ENCODE measurements at regions of chr3 and their contacts with region 1.

Region 1: GRCh38 chr3:123328851-123329635 is 119.8 kb downstream of the ADCY5 start:
- DNase-seq: peak; percentile 32
- H3K4me3 ChIP-seq: no peak overlapping the region
- H3K27ac ChIP-seq: no peak overlapping the region
- H3K4me1 ChIP-seq: peaks cover 11% of the 10 kb centered on the region
- H3K27me3 ChIP-seq: no peaks in the 10 kb centered on the region
- CTCF ChIP-seq: peak; percentile 85 to 93

Region 2: DNA sequence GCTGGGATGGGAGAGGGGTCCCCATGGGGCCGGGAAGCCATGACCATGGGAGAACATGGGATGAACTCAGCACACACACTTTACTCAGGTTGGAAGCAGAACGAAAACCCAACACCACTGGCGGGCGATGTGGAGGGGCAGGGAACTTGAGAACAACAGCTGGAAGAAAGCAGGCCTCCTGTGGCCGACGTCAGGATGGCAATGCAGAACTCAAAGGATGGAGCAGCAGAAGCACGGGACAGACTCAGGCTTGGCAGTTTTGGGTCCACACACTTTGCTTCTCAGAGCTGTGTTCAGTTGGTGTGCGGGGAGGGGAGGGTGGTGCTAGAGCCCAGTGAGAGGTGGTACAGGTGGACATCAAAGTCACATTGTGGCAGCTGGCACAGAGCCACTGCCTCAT is 46.6 kb before region 1 on chr3:
- CTCF ChIA-PET with region 1: no interaction called
- dilution Hi-C with region 1: no loop called
- in situ Hi-C with region 1: no loop called
- intact Hi-C with region 1: no loop called
- DNase-seq: no peak
- H3K4me3 ChIP-seq: no peak overlapping the region
- H3K27ac ChIP-seq: no peak overlapping the region
- H3K4me1 ChIP-seq: peaks cover 9% of the 10 kb centered on the region
- H3K27me3 ChIP-seq: no peaks in the 10 kb centered on the region
- CTCF ChIP-seq: no peak

Region 3: GRCh38 chr3:123361071-123361470 is 32.0 kb after region 1 on chr3:
- CTCF ChIA-PET with region 1: no interaction called
- dilution Hi-C with region 1: loop called (anchors 5 kb)
- in situ Hi-C with region 1: no loop called
- intact Hi-C with region 1: no loop called
- DNase-seq: no peak
- H3K4me3 ChIP-seq: no peak overlapping the region
- H3K27ac ChIP-seq: no peak overlapping the region
- H3K4me1 ChIP-seq: no peaks in the 10 kb centered on the region
- H3K27me3 ChIP-seq: peaks cover 1% of the 10 kb centered on the region
- CTCF ChIP-seq: peak; percentile 11 to 15

Region 4: GRCh38 chr3:123375014-123375940 is 46.2 kb after region 1 on chr3:
- CTCF ChIA-PET with region 1: no interaction called
- dilution Hi-C with region 1: no loop called
- in situ Hi-C with region 1: no loop called
- intact Hi-C with region 1: loop called (anchors 1 kb)
- DNase-seq: no peak
- H3K4me3 ChIP-seq: no peak overlapping the region
- H3K27ac ChIP-seq: no peak overlapping the region
- H3K4me1 ChIP-seq: peaks cover 15% of the 10 kb centered on the region
- H3K27me3 ChIP-seq: no peaks in the 10 kb centered on the region
- CTCF ChIP-seq: peak in 1 of 2 donors; percentile 39

Region 5: DNA sequence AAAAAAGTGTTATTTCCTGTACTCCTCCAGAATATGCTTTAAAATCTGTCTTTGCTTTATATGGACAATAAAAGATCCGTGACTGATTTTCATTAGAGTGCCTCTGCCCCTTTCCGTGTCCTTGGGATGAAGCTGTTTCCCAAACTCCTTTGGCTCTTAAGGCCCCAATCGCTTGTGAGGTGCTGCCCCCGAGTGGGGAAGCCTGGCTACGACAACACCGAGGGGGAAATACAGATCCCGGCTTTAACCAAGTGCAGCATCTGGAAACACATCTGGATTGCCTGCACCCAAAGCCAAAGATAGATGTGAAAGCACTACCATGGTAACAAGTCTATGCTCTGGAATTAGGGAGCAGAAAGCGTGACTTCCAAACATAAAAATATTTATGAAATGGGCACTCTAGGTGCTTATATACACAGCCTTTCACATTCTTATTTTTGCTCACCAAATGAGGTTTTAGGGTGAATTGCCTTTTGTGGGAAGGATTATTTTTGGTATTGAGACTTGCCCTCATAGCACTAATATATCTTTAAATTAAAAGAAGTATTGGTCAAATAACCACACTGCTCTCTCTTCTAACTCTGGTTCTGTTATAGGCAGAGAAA is 160.5 kb after region 1 on chr3:
- CTCF ChIA-PET with region 1: interaction called, 8 read pairs
- dilution Hi-C with region 1: no loop called
- in situ Hi-C with region 1: loop called (anchors 10 kb)
- intact Hi-C with region 1: loop called (anchors 1 kb)
- DNase-seq: peak; percentile 23
- H3K4me3 ChIP-seq: no peak overlapping the region
- H3K27ac ChIP-seq: no peak overlapping the region
- H3K4me1 ChIP-seq: no peaks in the 10 kb centered on the region
- H3K27me3 ChIP-seq: no peaks in the 10 kb centered on the region
- CTCF ChIP-seq: peak; percentile 75 to 93

Region 6: DNA sequence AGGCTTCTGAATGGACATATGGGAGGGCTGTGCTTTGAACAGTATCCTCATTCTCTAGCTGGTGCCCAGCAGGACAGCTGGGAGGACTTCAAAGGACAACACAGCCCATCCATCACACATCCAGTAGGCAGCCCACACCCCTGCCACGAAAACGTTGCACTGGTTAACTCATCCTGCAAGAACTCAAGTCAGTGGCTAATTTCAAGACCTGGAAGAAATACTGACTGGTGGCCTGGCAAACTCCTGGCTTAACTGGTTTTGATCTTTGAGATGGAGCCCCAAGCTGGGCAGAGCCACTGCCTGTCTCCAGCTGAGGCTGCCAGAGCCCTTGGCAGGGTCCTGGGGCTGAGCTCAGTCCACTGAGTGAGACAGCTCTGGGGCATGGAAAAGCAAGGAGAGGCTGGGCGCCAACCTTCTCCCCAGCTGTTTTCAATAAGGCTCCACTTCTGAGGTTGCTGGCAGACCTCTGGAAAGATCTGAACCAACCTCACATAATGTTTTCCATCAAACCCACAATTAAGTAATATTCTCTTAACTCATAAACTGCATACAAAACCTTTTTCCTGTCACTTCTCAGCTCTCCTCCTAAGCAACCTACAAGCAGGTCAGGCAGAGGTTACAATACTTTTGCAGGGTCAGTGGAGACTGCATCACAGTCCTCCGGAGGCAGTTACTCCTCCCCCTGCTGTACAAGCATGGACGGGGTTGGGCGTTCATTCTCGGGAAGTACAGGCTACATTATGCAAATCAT is 444.8 kb after region 1 on chr3:
- CTCF ChIA-PET with region 1: no interaction called
- dilution Hi-C with region 1: no loop called
- in situ Hi-C with region 1: no loop called
- intact Hi-C with region 1: no loop called
- DNase-seq: no peak
- H3K4me3 ChIP-seq: no peak overlapping the region
- H3K27ac ChIP-seq: no peak overlapping the region
- H3K4me1 ChIP-seq: peaks cover 11% of the 10 kb centered on the region
- H3K27me3 ChIP-seq: no peaks in the 10 kb centered on the region
- CTCF ChIP-seq: no peak

Measured in mammary epithelial cell (primary cell).